Esophagus muscularis mucosa (tissue), 4 donors: ENCODE measurements at regions of chr15 and their contacts with region 1.

Region 1: DNA sequence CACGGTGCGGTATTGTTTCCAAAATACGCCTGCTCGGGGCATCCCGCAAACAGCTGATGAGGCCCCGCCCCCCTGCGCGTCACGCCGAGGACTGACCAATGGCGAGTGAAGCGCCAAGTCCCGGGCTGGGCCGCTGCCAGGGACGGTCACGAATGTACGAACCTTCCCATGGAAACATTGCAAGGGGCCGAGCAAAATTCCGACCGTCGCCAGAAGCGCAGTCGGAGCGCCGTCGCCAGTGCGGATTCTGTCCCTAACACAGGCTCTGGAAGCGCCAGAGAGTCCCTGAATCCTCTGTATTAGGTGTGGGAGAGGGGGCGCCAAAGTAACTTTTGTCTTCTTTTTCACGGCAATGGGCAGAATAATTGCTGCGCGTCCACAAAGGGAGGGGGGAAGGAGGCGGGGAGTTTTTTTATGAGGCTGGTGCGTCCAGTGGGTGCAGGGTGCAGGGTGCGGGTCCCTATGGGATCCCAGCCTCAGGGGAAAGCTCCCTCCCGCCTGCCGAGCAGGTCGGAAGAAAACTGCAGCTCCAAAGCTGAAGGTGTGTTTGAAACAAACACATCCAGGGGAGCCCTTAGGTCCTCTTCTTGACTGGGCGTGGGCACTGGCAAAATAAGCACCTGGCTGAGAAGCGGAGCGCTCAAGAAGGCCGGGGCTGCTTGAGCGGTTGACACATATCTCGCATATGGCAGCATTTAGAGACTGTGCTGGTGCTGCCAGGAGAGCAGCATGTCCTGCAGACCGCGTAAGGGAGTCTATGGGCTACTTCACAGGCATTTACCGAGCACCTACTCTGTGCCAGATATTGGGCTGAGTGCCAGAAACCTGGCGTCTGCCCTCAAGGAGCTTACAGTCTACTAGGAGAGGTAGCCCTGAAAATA is at the start of gene BMF:
- DNase-seq: peak; percentile 100
- H3K4me3 ChIP-seq: peak within 1 kb of the TSS; percentile 71 to 98 (median 84)
- H3K27ac ChIP-seq: peak within 1 kb of the TSS; percentile 87 to 94 (median 92)
- H3K4me1 ChIP-seq: peaks cover 38 to 51% (median 50%) of the 10 kb centered on the region in 4 donors
- H3K27me3 ChIP-seq: no peaks in the 10 kb centered on the region
- CTCF ChIP-seq: peak; percentile 25 to 39 (median 25)
- EP300 ChIP-seq: no peak
- POLR2A ChIP-seq: peak; percentile 50
- total RNA-seq, gene BMF: 4.6 to 8.3 (median 6.3) TPM

Region 2: GRCh38 chr15:40038638-40039543 is 70.2 kb before region 1 on chr15 and contains the start of gene SRP14:
- intact Hi-C with region 1: loop called (anchors 2 kb)
- DNase-seq: peak; percentile 98
- H3K4me3 ChIP-seq: peak within 1 kb of the TSS; percentile 78 to 82 (median 78)
- H3K27ac ChIP-seq: peak within 1 kb of the TSS; percentile 92 to 95 (median 94)
- H3K4me1 ChIP-seq: peaks cover 19 to 39% (median 32%) of the 10 kb centered on the region in 4 donors
- H3K27me3 ChIP-seq: no peaks in the 10 kb centered on the region
- CTCF ChIP-seq: peak in 2 of 3 experiments; percentile 21 to 26
- EP300 ChIP-seq: no peak
- POLR2A ChIP-seq: peak; percentile 64
- total RNA-seq, gene SRP14: 262 to 412 (median 301) TPM

Region 3: DNA sequence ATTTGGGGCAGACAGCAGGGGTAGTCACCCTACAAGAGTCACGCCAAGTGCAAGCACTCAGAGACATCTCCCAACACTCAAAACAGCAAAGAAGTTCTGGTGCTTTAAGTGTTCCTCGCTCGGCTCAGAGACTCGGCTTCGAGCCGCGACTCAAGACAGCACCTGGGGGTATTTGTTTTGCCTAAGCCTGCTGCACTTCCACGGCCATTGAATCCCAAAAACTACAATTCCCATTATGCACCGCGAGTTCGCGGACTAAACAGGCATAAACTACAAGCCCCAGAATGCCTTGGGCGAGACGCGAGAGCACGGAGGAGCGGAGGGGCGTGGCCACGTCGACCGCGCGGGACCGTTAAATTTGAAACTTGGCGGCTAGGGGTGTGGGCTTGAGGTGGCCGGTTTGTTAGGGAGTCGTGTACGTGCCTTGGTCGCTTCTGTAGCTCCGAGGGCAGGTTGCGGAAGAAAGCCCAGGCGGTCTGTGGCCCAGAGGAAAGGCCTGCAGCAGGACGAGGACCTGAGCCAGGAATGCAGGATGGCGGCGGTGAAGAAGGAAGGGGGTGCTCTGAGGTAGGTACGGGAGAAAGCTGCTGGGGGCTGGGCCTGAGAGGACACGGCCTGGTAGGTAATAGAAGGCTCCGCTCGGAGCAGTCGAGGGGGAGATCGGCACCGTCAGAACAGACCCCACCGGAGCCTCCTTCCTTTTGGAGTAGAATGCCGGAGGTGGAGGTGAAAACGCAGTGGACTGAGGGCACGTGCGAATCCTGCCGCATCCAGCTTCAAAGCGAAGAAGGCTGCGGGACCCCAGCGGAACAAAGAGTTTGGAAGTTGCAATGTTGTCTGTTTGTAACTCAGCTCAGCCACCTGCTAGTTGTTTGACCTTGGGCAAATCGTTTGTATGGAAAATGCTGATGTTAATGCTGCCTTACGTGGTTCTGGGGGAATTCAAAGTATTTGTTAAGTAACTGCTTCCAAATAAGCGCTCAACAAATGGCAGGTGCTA is 51.9 kb after region 1 on chr15 and contains the start of gene BUB1B:
- intact Hi-C with region 1: loop called (anchors 5 kb)
- DNase-seq: peak; percentile 94
- H3K4me3 ChIP-seq: peak within 1 kb of the TSS; percentile 56 to 73 (median 58)
- H3K27ac ChIP-seq: no peak within 1 kb of the TSS
- H3K4me1 ChIP-seq: peaks cover 10 to 13% (median 12%) of the 10 kb centered on the region in 4 donors
- H3K27me3 ChIP-seq: no peaks in the 10 kb centered on the region
- CTCF ChIP-seq: peak in 1 of 3 experiments; percentile 24
- EP300 ChIP-seq: no peak
- POLR2A ChIP-seq: no peak
- total RNA-seq, gene BUB1B: 0.06 to 1.3 (median 0.17) TPM in 3 of 4 donors, not detected in the other